ENCODE measurements at regions of chr5 and their contacts with region 1.

Region 1: GRCh38 chr5:147188200-147189108 is 46.4 kb upstream of the STK32A start:
- DNase-seq: peak; percentile 82
- H3K4me3 Mint-ChIP-seq: no peak overlapping the region
- H3K27ac Mint-ChIP-seq: no peak overlapping the region
- H3K4me1 Mint-ChIP-seq: no peaks in the 10 kb centered on the region
- H3K27me3 Mint-ChIP-seq: no peaks in the 10 kb centered on the region
- CTCF ChIP-seq: peak; percentile 91

Region 2: GRCh38 chr5:146528236-146528635 is 660.2 kb before region 1 on chr5:
- CTCF ChIA-PET with region 1: interaction called, 139 read pairs
- POLR2A ChIA-PET with region 1: interaction called, 6 read pairs
- intact Hi-C with region 1: loop called (anchors 1 kb)
- DNase-seq: peak; percentile 36
- H3K4me3 Mint-ChIP-seq: no peak overlapping the region
- H3K27ac Mint-ChIP-seq: no peak overlapping the region
- H3K4me1 Mint-ChIP-seq: peaks cover 16% of the 10 kb centered on the region
- H3K27me3 Mint-ChIP-seq: no peaks in the 10 kb centered on the region
- CTCF ChIP-seq: peak; percentile 9

Region 3: DNA sequence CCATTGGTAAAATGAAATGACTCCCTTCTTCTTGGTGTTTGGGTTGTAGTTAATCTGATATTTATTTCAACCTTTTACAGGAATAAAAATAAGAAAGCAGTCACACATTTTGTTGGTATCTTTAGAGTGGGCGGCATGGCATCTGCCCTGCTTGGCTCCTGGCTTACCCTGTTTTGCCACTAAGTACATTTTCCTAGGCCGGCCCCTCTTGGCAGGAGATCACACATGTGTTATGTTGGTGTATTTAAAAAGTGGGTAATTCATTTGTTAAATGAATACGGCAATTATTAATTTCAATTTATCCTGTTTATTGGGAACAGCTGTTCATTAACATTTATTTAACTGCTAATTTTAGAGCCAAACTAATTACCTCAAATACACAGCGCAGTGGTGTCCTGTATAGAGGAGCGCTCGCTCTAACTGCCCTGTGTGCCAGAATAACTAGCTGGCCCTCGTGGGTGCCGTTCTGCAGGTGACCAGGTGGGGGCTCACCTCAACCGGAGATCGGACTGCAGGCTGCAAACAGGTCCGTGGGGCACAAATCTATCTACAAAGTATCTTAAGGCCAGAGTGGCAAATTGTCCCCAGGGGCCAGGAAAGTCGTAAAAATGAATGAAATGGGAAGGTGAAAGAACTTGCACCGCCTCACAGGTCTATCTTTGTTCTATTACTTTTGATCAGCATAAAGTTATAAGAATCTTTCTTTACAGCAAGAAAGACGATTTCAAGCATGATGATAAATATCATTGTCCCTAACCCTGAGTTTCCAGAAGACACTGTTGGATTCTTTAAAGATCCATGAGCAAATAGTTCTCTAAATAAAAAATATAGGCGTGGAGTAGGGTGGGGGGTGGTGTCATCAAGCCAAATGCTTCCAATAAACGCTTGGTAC is 646.2 kb before region 1 on chr5:
- CTCF ChIA-PET with region 1: interaction called, 124 read pairs
- POLR2A ChIA-PET with region 1: interaction called, 3 read pairs
- intact Hi-C with region 1: loop called (anchors 1 kb)
- DNase-seq: peak; percentile 78
- H3K4me3 Mint-ChIP-seq: no peak overlapping the region
- H3K27ac Mint-ChIP-seq: no peak overlapping the region
- H3K4me1 Mint-ChIP-seq: peaks cover 11% of the 10 kb centered on the region
- H3K27me3 Mint-ChIP-seq: peaks cover 20% of the 10 kb centered on the region
- CTCF ChIP-seq: peak; percentile 99

Region 4: GRCh38 chr5:147098233-147098790 is 90.1 kb before region 1 on chr5:
- CTCF ChIA-PET with region 1: interaction called, 37 read pairs
- POLR2A ChIA-PET with region 1: no interaction called
- intact Hi-C with region 1: loop called (anchors 5 kb)
- DNase-seq: peak; percentile 69
- H3K4me3 Mint-ChIP-seq: no peak overlapping the region
- H3K27ac Mint-ChIP-seq: peak overlapping the region; percentile 7
- H3K4me1 Mint-ChIP-seq: peaks cover 13% of the 10 kb centered on the region
- H3K27me3 Mint-ChIP-seq: no peaks in the 10 kb centered on the region
- CTCF ChIP-seq: peak; percentile 61

Region 5: GRCh38 chr5:147177125-147177840 is 11.2 kb before region 1 on chr5:
- CTCF ChIA-PET with region 1: interaction called, 100 read pairs
- POLR2A ChIA-PET with region 1: no interaction called
- intact Hi-C with region 1: no loop called
- DNase-seq: no peak
- H3K4me3 Mint-ChIP-seq: no peak overlapping the region
- H3K27ac Mint-ChIP-seq: no peak overlapping the region
- H3K4me1 Mint-ChIP-seq: no peaks in the 10 kb centered on the region
- H3K27me3 Mint-ChIP-seq: peaks cover 9% of the 10 kb centered on the region
- CTCF ChIP-seq: no peak

Region 6: DNA sequence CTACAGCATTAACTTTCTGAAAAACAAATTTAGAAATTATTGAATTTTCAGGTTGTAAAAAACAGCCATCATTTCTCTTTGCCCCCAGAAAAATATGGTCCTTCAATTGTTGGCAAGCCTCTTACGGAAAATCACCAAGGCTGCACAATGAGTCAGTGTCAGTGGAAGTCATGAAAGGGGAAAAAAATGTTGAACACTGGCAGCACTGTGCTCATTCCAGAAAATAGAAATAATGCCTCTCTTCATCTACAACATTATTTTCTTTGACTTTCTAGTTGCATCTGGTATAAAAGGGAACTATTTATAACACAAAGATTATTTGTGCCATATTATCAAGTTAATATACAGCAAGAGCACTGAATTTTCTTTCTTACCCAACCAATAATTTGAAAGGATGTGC is 19.7 kb after region 1 on chr5:
- CTCF ChIA-PET with region 1: interaction called, 16 read pairs
- POLR2A ChIA-PET with region 1: no interaction called
- intact Hi-C with region 1: no loop called
- DNase-seq: no peak
- H3K4me3 Mint-ChIP-seq: no peak overlapping the region
- H3K27ac Mint-ChIP-seq: no peak overlapping the region
- H3K4me1 Mint-ChIP-seq: no peaks in the 10 kb centered on the region
- H3K27me3 Mint-ChIP-seq: peaks cover 1% of the 10 kb centered on the region
- CTCF ChIP-seq: no peak

Region 7: DNA sequence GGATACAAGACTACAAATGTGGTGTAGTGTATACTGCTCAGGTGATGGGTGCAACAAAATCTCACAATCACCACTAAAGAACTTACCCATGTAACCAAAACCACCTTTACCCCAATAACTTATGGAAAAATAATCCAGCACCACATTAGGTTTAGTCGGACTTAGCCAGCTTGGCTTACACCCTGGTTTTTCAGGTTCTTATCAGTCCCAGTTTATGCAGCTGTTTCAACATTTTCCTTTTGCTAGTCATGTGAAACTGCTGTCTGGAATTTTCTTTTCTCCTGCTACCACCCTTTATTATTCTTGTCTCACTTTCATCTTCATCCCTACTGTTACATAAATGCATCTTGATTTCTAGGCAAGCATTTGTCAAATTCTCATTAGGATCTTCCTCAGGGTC is 97.8 kb after region 1 on chr5:
- CTCF ChIA-PET with region 1: interaction called, 10 read pairs
- POLR2A ChIA-PET with region 1: no interaction called
- intact Hi-C with region 1: no loop called
- DNase-seq: no peak
- H3K4me3 Mint-ChIP-seq: no peak overlapping the region
- H3K27ac Mint-ChIP-seq: no peak overlapping the region
- H3K4me1 Mint-ChIP-seq: no peaks in the 10 kb centered on the region
- H3K27me3 Mint-ChIP-seq: no peaks in the 10 kb centered on the region
- CTCF ChIP-seq: no peak

Region 8: DNA sequence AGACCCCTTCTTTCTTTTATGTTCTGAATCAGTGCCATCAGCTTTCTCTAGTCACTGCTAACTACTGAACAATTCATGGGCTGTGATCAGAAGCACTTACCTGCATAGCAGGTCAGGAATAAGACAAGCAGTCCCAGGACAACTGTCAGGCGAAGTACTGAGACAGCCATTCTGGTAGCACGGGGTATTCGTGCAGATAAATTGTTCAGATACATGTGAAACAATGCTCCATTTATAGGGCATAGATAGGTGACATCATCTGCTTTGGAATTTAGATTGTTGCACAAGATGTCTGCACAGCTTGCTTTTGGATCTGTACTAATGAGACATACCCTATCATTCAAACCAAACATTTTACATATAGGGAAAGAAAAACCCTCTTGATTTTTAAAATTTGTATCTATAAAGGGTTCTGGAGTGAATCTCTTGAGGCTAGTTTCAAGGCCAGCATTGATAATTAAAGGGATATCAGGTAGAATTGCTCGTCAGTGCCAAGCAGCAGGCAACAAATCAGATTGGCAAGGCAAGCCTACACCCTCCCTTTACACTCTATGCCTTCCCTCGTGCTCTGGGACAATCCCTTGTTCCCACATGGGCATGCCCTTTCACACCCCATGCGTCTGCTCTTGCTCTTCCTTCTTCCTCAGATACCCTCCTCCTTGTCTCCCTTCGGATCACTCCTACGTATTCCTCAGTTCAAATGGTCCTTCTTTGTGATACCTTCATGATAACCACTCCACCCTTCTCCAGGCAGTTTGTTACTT is 718.1 kb after region 1 on chr5 and contains the start of gene C5orf46:
- CTCF ChIA-PET with region 1: no interaction called
- POLR2A ChIA-PET with region 1: no interaction called
- intact Hi-C with region 1: no loop called
- DNase-seq: peak; percentile 75
- H3K4me3 Mint-ChIP-seq: peak within 1 kb of the TSS; percentile 69
- H3K27ac Mint-ChIP-seq: peak within 1 kb of the TSS; percentile 85
- H3K4me1 Mint-ChIP-seq: peaks cover 39% of the 10 kb centered on the region
- H3K27me3 Mint-ChIP-seq: no peaks in the 10 kb centered on the region
- CTCF ChIP-seq: no peak
- total RNA-seq, gene C5orf46: 2.1 and 5.7 TPM in 2 replicates

Measured in MCF 10A (cell line).